AG04449 (cell line): ENCODE measurements at regions of chr2 and their contacts with region 1.

Region 1: GRCh38 chr2:219160186-219161017 is at the start of gene NHEJ1:
- DNase-seq: no peak
- H3K4me3 ChIP-seq: peak within 1 kb of the TSS; percentile 87
- CTCF ChIP-seq: peak; percentile 96

Region 2: GRCh38 chr2:218995972-218996711 is 164.3 kb before region 1 on chr2:
- CTCF ChIA-PET with region 1: interaction called, 135 read pairs
- POLR2A ChIA-PET with region 1: no interaction called
- DNase-seq: no peak
- H3K4me3 ChIP-seq: peak overlapping the region; percentile 50
- CTCF ChIP-seq: peak; percentile 90

Region 3: GRCh38 chr2:219073413-219074129 is 86.8 kb before region 1 on chr2:
- CTCF ChIA-PET with region 1: interaction called, 191 read pairs
- POLR2A ChIA-PET with region 1: no interaction called
- DNase-seq: peak; percentile 16
- H3K4me3 ChIP-seq: no peak overlapping the region
- CTCF ChIP-seq: peak; percentile 52

Region 4: GRCh38 chr2:219149667-219150066 is 10.7 kb before region 1 on chr2:
- CTCF ChIA-PET with region 1: interaction called, 56 read pairs
- POLR2A ChIA-PET with region 1: no interaction called
- DNase-seq: no peak
- H3K4me3 ChIP-seq: no peak overlapping the region
- CTCF ChIP-seq: no peak

Region 5: DNA sequence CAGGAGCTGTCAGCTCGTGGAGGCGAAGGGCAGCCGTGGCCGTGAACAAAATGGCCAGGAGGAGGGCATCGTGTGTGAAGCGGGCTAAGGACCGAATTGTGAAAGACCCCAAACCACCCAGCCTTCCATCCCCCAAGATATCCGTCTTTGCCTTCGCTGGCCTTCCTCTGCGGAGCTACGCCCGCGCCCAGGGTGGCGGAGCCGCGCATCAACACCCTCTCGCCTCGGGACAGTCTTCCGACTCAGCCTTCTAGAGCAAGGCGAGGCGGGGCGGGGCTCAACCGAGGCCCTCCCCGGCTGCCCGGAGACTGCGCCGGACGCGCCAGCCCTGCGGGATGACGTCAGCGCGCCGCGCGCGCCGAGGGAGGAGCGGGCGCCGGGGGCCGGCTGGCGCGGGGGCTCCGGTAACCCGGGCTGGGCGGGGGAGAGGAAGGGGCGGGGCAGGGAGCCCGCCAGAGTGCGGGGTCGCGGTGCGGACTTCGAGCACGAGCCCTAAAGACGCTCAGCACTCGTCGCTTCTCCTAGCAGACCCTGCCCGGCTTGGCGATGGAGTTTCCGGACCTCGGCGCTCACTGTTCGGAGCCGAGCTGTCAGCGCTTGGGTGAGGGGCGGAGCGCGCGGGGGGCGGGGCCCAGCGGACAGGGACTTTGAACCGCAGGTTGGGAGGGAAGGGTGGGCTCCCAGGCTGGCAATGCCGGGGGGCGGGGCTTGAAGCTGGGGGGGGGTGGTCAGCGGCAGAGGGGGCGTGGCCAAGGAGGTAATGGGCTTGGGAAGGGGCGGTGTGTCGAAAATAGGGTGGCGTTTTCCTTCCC is 46.2 kb after region 1 on chr2 and contains the start of gene ZFAND2B:
- CTCF ChIA-PET with region 1: interaction called, 17 read pairs
- POLR2A ChIA-PET with region 1: no interaction called
- DNase-seq: no peak
- H3K4me3 ChIP-seq: peak within 1 kb of the TSS; percentile 86
- CTCF ChIP-seq: no peak

Region 6: GRCh38 chr2:219388127-219388844 is 227.9 kb after region 1 on chr2:
- CTCF ChIA-PET with region 1: interaction called, 10 read pairs
- POLR2A ChIA-PET with region 1: no interaction called
- DNase-seq: peak; percentile 73
- H3K4me3 ChIP-seq: peak overlapping the region; percentile 56
- CTCF ChIP-seq: peak; percentile 60

Region 7: DNA sequence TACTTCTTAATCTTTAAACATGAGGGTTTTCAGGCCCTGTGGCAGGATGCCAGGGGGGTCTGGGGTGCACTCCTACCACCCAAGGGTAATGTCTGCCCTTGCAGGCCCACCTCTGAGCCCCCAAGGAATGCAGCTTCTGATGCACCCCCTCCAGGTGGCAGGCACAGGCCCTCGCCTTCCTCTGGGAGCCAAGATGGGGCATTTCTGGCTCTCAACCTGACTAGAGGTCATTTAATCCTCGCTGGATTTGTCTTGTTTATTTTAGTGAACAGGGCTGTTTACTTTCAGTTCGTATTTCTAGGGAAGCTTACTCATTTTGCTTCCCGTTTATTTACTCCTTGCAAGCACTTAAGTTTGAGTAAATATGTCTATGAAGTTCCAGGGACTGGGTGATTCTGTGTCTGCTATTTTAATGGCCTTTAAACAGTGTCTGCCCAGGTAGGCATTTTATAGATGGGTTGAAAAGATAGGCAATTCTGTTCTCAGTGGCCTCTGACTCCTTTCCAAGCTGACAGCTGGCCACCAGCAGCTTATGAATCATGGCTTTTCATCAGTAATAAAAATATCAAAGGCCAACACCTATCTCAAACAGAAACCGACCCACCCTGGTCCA is 238.4 kb after region 1 on chr2:
- CTCF ChIA-PET with region 1: no interaction called
- POLR2A ChIA-PET with region 1: no interaction called
- DNase-seq: no peak
- H3K4me3 ChIP-seq: no peak overlapping the region
- CTCF ChIP-seq: no peak

Region 8: GRCh38 chr2:219664944-219665343 is 504.5 kb after region 1 on chr2:
- CTCF ChIA-PET with region 1: no interaction called
- POLR2A ChIA-PET with region 1: no interaction called
- DNase-seq: no peak
- H3K4me3 ChIP-seq: no peak overlapping the region
- CTCF ChIP-seq: no peak